ENCODE measurements at regions of chr7 and their contacts with region 1.

Region 1: GRCh38 chr7:89966067-89966665 is 188.1 kb upstream of the STEAP1 start:
- DNase-seq: no peak
- H3K4me3 ChIP-seq: no peak overlapping the region
- H3K27ac ChIP-seq: no peak overlapping the region
- H3K4me1 ChIP-seq: no peaks in the 10 kb centered on the region
- H3K27me3 ChIP-seq: no peaks in the 10 kb centered on the region
- CTCF ChIP-seq: no peak
- EP300 ChIP-seq: no peak
- POLR2A ChIP-seq: no peak

Region 2: DNA sequence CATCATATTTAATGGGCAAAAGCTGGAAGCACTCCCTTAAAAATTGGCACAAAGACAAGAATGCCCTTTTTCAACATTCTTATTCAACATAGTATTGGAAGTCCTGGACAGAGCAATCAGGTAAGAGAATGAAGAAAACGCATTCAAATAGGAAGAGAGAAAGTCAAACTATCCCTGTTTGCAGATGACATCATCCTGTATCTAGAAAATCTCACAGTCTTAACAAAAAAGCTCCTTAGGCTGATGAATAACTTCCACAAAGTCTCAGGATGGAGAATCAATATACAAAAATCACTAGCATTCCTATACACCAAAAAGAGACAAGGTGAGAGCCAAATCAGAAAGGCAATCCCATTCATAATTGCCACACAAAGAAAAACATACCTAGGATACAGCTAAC is 289.3 kb before region 1 on chr7:
- intact Hi-C with region 1: no loop called
- DNase-seq: no peak
- H3K4me3 ChIP-seq: no peak overlapping the region
- H3K27ac ChIP-seq: no peak overlapping the region
- H3K4me1 ChIP-seq: no peaks in the 10 kb centered on the region
- H3K27me3 ChIP-seq: no peaks in the 10 kb centered on the region
- CTCF ChIP-seq: no peak
- EP300 ChIP-seq: no peak
- POLR2A ChIP-seq: no peak

Region 3: DNA sequence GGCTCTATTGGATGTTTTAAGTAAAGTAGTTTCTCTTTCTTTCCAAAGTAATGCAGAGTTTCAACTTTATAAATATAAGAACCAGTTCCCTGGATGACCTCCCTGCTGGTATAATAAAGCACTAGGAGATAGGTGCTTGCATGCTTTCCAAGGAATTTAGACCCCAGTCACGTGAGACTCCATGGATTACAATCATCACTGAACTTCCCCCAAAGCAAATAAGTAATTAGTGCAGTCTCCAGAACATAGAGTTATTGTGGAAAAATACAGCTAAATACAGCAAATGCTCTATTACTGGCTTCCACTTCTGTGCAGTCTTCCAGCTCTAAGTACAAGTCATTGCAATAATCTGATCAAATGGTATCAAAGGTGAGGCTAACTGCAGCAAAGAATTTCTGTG is 32.1 kb before region 1 on chr7:
- intact Hi-C with region 1: loop called (anchors 2 kb)
- DNase-seq: no peak
- H3K4me3 ChIP-seq: no peak overlapping the region
- H3K27ac ChIP-seq: no peak overlapping the region
- H3K4me1 ChIP-seq: no peaks in the 10 kb centered on the region
- H3K27me3 ChIP-seq: no peaks in the 10 kb centered on the region
- CTCF ChIP-seq: no peak
- EP300 ChIP-seq: no peak
- POLR2A ChIP-seq: no peak

Region 4: GRCh38 chr7:90288154-90288553 is 322.0 kb after region 1 on chr7:
- intact Hi-C with region 1: no loop called
- DNase-seq: no peak
- H3K4me3 ChIP-seq: no peak overlapping the region
- H3K27ac ChIP-seq: no peak overlapping the region
- H3K4me1 ChIP-seq: no peaks in the 10 kb centered on the region
- H3K27me3 ChIP-seq: no peaks in the 10 kb centered on the region
- CTCF ChIP-seq: no peak
- EP300 ChIP-seq: no peak
- POLR2A ChIP-seq: no peak

Region 5: GRCh38 chr7:90677486-90678404 is 711.6 kb after region 1 on chr7:
- intact Hi-C with region 1: no loop called
- DNase-seq: no peak
- H3K4me3 ChIP-seq: no peak overlapping the region
- H3K27ac ChIP-seq: no peak overlapping the region
- H3K4me1 ChIP-seq: peaks cover 7 to 26% (median 13%) of the 10 kb centered on the region in 4 donors
- H3K27me3 ChIP-seq: no peaks in the 10 kb centered on the region
- CTCF ChIP-seq: no peak
- EP300 ChIP-seq: no peak
- POLR2A ChIP-seq: no peak